Activated CD4-positive, alpha-beta memory T cell treated with anti-CD3 and anti-CD28 coated beads for 36 hours (primary cell): ENCODE measurements at regions of chr16 and their contacts with region 1.

Region 1: GRCh38 chr16:81868057-81868748 is 89.1 kb downstream of the PLCG2 start:
- DNase-seq: no peak
- H3K4me3 Mint-ChIP-seq: no peak overlapping the region
- H3K27ac Mint-ChIP-seq: no peak overlapping the region
- H3K4me1 Mint-ChIP-seq: peaks cover 6% of the 10 kb centered on the region
- H3K27me3 Mint-ChIP-seq: no peaks in the 10 kb centered on the region

Region 2: GRCh38 chr16:81850197-81850944 is 17.8 kb before region 1 on chr16:
- CTCF ChIA-PET with region 1: no interaction called
- POLR2A ChIA-PET with region 1: no interaction called
- intact Hi-C with region 1: no loop called
- DNase-seq: no peak
- H3K4me3 Mint-ChIP-seq: no peak overlapping the region
- H3K27ac Mint-ChIP-seq: no peak overlapping the region
- H3K4me1 Mint-ChIP-seq: no peaks in the 10 kb centered on the region
- H3K27me3 Mint-ChIP-seq: no peaks in the 10 kb centered on the region

Region 3: GRCh38 chr16:81879625-81880024 is 11.4 kb after region 1 on chr16:
- CTCF ChIA-PET with region 1: interaction called, 32 read pairs
- POLR2A ChIA-PET with region 1: interaction called, 3 read pairs
- intact Hi-C with region 1: no loop called
- DNase-seq: peak; percentile 32
- H3K4me3 Mint-ChIP-seq: no peak overlapping the region
- H3K27ac Mint-ChIP-seq: no peak overlapping the region
- H3K4me1 Mint-ChIP-seq: no peaks in the 10 kb centered on the region
- H3K27me3 Mint-ChIP-seq: no peaks in the 10 kb centered on the region